ENCODE measurements at regions of chr1 and their contacts with region 1.

Region 1: DNA sequence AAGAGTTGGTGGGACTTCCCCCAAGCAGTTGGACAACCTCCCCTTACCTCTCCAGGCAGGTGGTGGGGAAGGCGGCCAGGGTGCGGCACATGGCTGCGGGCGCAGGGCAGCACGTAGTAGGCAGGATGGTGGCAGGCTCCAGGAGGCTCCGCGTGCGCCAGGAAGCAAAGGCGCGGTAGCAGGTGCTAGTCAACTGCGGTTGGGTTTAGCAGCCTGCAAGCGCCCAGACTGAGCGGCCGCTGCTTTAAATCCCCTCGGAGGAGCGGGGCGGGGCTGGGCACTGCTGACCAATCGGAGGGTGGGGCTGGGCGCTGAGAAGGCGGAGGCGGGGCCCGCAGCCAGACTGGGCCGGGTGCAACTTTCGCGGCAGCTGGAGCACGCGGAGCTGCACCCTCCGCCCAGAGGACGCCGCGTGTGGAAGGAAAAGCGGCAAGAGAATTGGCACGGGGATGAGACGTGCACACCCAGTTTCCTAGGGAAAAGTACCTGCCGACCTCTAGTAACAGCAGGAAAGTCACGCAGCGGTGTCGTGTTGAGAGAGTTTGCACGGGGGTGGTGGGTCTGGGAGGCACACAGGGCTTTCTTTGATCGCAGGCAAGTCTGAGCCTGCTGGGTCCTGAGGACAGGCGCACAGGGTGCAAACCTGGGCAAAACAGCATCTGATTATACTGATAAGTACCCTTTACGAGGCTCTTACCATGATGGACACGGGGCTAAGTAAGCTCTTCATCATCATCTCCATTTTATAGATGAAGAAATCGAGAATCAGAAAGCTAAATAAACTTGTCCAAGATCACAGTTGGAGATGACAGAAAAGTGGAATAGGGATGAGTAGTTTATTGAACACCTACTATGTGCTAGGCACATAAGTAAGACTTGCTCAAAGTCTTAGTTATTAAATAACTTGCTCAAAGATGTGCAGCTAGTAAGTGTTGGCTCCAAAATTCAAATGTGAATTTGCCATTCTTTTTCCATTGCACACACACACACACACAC is at the start of gene RGS16:
- DNase-seq: peak; percentile 82 to 90
- H3K4me3 ChIP-seq: peak within 1 kb of the TSS; percentile 47 to 73 (median 57)
- H3K27ac ChIP-seq: peak within 1 kb of the TSS; percentile 48 to 65
- H3K4me1 ChIP-seq: peaks cover 0 to 16% of the 10 kb centered on the region in 2 donors
- H3K27me3 ChIP-seq: no peaks in the 10 kb centered on the region
- CTCF ChIP-seq: no peak
- POLR2A ChIP-seq: peak; percentile 44
- total RNA-seq, gene RGS16: 1.3 to 6.3 (median 2.3) TPM

Region 2: GRCh38 chr1:182622901-182623528 is 18.5 kb after region 1 on chr1:
- intact Hi-C with region 1: no loop called
- DNase-seq: no peak
- H3K4me3 ChIP-seq: no peak overlapping the region
- H3K27ac ChIP-seq: peak overlapping the region in 1 of 2 donors; percentile 55
- H3K4me1 ChIP-seq: no peaks in the 10 kb centered on the region
- H3K27me3 ChIP-seq: no peaks in the 10 kb centered on the region
- CTCF ChIP-seq: no peak
- POLR2A ChIP-seq: no peak

Region 3: GRCh38 chr1:182781841-182782586 is 177.5 kb after region 1 on chr1:
- intact Hi-C with region 1: loop called (anchors 5 kb)
- DNase-seq: peak; percentile 48 to 65
- H3K4me3 ChIP-seq: no peak overlapping the region
- H3K27ac ChIP-seq: no peak overlapping the region
- H3K4me1 ChIP-seq: no peaks in the 10 kb centered on the region
- H3K27me3 ChIP-seq: no peaks in the 10 kb centered on the region
- CTCF ChIP-seq: peak; percentile 25 to 45 (median 34)
- POLR2A ChIP-seq: no peak